Posterior vena cava (tissue), 2 donors: ENCODE measurements at regions of chr4 and their contacts with region 1.

Region 1: DNA sequence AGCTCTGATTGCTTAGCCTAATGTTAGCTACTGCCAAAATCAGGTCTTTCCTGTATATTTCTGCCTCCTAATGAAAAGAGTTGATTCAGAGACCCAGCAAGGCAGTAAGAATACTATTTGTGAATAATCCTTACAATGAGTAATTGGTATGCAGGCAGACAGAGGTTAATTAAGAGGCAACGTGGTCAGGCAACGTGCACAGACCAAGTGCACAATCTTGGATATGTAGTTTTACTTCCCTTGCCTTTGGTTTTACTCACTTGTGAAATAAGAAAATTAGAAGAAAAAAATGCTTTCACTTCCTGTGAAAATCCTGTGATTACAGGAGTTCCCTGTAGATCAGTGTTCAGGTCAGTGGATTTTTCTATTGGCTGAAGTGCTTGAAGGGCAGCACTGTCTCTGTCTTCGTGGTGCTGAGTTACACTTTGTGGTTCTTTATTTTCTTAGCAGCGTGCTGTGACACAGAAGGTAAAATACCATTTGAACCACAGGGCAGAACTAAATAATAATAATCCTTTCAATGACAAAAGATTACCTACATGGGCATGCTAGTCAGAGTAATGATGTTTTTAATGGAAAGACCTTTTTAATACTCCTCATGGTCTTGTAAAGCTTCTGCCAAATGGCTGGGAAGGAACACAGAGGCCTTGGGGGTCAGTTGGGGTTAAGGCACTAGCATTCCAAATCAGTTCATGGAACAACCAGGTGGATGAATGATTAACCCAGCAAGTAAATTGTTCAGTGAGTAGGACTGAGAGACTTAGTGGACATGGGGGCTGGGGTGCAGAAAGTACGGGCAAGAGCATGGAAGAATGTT is 430.9 kb downstream of the MAPK10 start:
- DNase-seq: no peak

Region 2: GRCh38 chr4:85909851-85910250 is 19.1 kb before region 1 on chr4:
- intact Hi-C with region 1: loop called in 1 of 2 experiments (anchors 1 kb)
- DNase-seq: no peak